PC-9 (cell line): ENCODE measurements at regions of chr5 and their contacts with region 1.

Region 1: GRCh38 chr5:172274921-172275753 is 8.4 kb downstream of the UBTD2 start:
- DNase-seq: peak in 1 of 2 experiments; percentile 62
- H3K4me3 ChIP-seq: no peak overlapping the region
- H3K27ac ChIP-seq: peak overlapping the region; percentile 80
- H3K4me1 ChIP-seq: peaks cover 34% of the 10 kb centered on the region
- H3K27me3 ChIP-seq: no peaks in the 10 kb centered on the region
- CTCF ChIP-seq: no peak

Region 2: GRCh38 chr5:172175263-172175719 is 99.8 kb before region 1 on chr5:
- CTCF ChIA-PET with region 1: interaction called, 13 read pairs
- POLR2A ChIA-PET with region 1: no interaction called
- intact Hi-C with region 1: no loop called
- DNase-seq: no peak
- H3K4me3 ChIP-seq: no peak overlapping the region
- H3K27ac ChIP-seq: no peak overlapping the region
- H3K4me1 ChIP-seq: no peaks in the 10 kb centered on the region
- H3K27me3 ChIP-seq: no peaks in the 10 kb centered on the region
- CTCF ChIP-seq: no peak

Region 3: DNA sequence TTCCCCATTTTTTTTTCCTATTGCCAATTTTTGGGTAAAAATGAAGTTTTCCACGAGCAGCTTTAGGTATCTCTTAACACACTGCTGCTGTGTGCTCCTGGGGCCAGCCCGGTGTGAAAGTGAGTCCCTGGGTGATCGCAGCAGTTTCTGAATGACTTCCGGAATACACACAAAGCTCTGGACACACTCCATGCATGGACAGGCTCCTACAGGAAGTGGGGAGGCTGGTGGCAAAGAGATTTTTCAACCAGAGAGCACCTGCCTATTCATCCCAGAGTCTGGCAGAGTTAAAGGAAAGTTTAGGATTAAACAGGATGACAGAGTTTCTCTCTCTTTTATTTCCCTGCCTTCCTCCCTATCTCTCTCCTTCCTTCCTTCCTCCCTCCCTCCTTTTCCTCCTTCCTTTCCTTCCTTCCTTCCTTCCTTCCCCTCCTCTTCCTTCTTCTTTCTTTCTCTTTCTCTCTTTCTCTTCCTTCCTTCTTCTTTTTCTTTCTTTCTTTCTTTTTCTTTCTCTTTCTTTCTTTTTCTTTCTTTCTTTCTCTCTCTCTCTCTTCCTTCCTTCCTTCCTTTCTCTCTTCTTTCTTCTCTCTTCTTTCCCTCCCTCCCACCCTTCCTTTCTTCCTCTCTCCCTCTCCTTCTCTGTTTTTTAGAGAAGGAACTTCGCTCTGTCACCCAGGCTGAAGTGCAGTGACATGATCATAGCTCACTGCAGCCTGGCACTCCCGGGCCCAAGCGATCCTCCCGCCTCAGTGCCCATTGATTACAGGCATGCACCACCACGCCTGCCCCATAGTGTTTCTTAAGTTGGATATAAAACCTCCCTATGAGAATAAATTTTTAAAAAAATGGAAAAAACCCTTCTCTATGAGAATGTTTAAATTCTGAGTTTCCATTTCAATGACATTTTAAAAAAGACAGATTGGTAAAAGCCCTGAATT is 47.2 kb after region 1 on chr5:
- CTCF ChIA-PET with region 1: no interaction called
- POLR2A ChIA-PET with region 1: interaction called, 18 read pairs
- intact Hi-C with region 1: no loop called
- DNase-seq: no peak
- H3K4me3 ChIP-seq: no peak overlapping the region
- H3K27ac ChIP-seq: no peak overlapping the region
- H3K4me1 ChIP-seq: peaks cover 7% of the 10 kb centered on the region; the same call in 1 of the 2 replicates
- H3K27me3 ChIP-seq: no peaks in the 10 kb centered on the region
- CTCF ChIP-seq: no peak